ENCODE measurements at regions of chr7 and their contacts with region 1.

Region 1: DNA sequence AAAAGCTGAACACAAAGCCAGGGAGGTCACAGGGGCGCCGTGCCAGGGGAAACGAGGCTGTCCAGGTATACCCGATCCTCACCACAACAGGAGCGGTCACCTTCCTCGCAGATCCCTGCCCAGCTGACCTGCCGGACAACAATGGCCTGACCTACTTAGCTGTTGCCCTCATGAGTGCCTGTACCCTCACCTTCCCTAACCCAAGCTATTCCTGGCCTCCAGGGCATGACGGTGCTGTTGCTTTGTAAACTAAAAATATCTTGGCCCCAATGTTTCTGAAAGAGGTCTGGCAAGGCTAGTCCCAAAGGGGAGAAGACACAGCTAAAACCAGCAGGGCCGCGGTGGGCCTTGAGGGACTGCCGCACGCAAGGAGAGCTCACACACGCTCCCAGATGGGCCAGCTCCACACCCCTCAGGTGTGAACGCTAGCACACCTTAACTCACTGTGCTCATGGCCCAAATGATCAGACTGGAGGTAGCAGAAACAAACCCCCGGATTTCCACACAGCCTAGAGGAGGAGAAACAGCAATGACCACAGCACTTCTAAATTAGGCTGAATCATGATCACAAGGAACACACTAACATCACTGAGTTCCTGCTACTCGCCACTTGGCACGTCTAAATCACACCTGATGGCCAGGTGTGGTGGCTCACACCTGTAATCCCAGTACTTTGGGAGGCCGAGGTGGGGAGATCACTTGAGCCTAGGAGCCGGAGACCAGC is 66.3 kb upstream of the CYTH3 start:
- DNase-seq: no peak
- ATAC-seq: no peak; a peak in 1 of 6 replicates
- H3K4me3 ChIP-seq: no peak overlapping the region
- H3K27ac ChIP-seq: no peak overlapping the region
- H3K4me1 ChIP-seq: no peaks in the 10 kb centered on the region
- CTCF ChIP-seq: no peak
- EP300 ChIP-seq: no peak
- POLR2A ChIP-seq: no peak
- RAD21 ChIP-seq: no peak

Region 2: GRCh38 chr7:6350433-6351058 is 11.8 kb after region 1 on chr7:
- CTCF ChIA-PET with region 1: interaction called, 10 read pairs
- POLR2A ChIA-PET with region 1: no interaction called
- DNase-seq: no peak
- ATAC-seq: no peak
- H3K4me3 ChIP-seq: no peak overlapping the region
- H3K27ac ChIP-seq: no peak overlapping the region
- H3K4me1 ChIP-seq: no peaks in the 10 kb centered on the region
- CTCF ChIP-seq: no peak
- EP300 ChIP-seq: no peak
- POLR2A ChIP-seq: no peak
- RAD21 ChIP-seq: no peak

Region 3: GRCh38 chr7:6691609-6692106 is 352.9 kb after region 1 on chr7:
- CTCF ChIA-PET with region 1: no interaction called
- POLR2A ChIA-PET with region 1: no interaction called
- DNase-seq: peak in 1 of 2 experiments; percentile 56
- ATAC-seq: 0 out of 6 replicates have a peak, but pooled peaks of 1 of the 2 experiments have one; percentile 47
- H3K4me3 ChIP-seq: no peak overlapping the region
- H3K27ac ChIP-seq: no peak overlapping the region
- H3K4me1 ChIP-seq: no peaks in the 10 kb centered on the region
- CTCF ChIP-seq: no peak
- EP300 ChIP-seq: no peak
- POLR2A ChIP-seq: no peak
- RAD21 ChIP-seq: no peak